ENCODE measurements at regions of chr6 and their contacts with region 1.

Region 1: DNA sequence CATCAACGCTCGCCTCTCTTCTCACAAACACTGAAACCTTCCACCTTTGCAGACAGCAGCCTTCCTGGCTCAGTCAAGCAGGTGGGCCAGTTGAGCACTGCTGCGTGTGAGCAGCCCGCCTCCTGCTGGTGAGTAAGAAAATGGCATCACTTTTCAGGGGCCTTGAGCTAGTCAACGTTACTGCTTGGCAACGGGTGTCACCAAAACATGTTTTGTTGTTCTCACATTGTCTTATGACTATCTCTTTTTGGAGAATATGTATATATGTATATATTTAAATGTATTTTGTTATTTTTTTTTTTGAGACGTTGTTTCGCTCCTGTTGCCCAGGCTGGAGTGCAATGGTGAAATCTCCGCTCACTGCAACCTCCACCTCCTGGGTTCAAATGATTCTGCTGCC is 97.0 kb upstream of the AGPAT4 start:
- H3K4me3 ChIP-seq: no peak overlapping the region
- H3K27ac ChIP-seq: no peak overlapping the region
- H3K4me1 ChIP-seq: no peaks in the 10 kb centered on the region
- CTCF ChIP-seq: peak; percentile 78

Region 2: DNA sequence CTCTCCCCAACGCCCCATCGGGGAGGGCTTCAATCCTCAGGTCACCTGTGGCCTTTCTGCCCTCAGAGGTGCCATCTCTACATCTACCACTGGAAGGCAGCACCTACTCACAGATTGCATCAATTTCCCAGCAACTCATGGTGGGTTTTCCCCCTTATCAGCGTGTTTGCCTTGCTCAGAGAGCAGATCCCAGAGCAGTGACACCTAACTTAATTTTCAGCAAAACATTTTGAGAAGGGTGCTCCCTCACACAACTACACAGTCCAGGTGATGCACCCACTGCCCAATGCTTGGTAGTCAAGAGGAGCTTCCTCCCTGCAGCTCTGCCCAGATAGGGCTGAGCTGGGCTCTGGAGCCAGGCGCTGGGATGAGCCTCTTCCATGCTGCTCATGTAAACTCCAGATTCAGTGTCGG is 620.6 kb before region 1 on chr6:
- CTCF ChIA-PET with region 1: interaction called, 59 read pairs
- POLR2A ChIA-PET with region 1: interaction called, 4 read pairs
- H3K4me3 ChIP-seq: no peak overlapping the region
- H3K27ac ChIP-seq: no peak overlapping the region
- H3K4me1 ChIP-seq: no peaks in the 10 kb centered on the region
- CTCF ChIP-seq: peak; percentile 69

Region 3: DNA sequence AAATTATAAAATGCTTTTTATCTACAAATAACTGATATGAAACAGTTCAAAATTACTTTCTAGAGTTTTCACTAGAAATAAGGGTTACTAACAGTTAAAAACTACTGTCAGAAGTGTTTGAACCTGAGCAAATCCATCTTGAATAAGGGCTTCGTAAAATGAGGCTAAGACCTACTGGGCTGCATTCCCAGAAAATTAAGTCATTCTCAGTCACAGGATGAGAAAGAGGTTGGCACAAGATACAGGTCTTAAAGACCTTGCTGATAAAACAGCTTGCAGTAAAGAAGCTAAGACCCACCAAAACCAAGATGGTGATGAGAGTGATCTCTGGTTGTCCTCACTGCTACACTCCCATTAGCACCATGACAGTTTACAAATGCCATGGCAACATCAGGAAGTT is 575.2 kb before region 1 on chr6:
- CTCF ChIA-PET with region 1: interaction called, 11 read pairs
- POLR2A ChIA-PET with region 1: no interaction called
- H3K4me3 ChIP-seq: no peak overlapping the region
- H3K27ac ChIP-seq: no peak overlapping the region
- H3K4me1 ChIP-seq: no peaks in the 10 kb centered on the region
- CTCF ChIP-seq: no peak

Region 4: DNA sequence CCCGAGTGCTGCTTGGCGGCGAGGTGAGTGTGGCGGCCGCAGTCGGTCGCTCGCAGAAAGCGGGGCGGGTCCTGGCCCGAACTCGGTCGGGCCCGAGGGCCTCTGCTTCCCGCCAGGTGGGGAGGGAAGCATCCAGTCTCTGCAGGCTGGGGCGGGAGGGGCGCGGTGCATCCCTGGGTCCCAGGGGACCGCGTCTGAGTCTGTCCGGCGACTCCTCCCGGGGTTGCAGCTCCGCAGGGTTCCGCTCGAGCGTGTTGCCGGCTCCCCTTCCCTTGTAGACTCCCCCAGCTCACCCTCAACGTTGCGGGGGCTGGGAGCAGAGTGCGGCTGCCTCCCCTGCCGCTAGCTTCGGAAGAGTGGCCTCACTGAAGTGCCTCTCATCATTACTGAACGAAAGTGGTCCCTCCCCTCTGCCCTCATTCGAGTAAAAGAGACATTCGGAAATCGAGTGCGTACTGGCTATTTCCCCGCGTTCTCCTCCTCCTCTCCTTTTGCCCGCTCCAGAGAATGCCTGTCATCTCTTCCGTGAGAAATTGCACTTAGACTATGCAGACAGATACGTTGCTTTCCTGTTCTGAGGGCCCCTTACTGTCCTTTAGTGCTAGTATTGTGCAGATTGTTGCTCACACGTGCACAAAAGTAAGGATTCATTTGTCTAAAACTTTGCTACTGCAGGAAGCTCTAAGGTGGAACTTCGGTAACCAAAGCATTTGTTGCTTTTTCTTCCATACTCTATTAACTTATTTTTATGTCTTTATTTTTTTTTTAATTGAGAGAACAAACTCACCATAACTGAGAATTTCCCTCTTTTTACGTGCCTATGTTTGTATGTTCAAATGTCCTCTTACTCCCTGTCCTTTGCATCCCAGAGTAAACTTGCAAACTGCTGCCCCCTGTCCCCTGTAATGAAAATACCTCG is 378.6 kb before region 1 on chr6:
- CTCF ChIA-PET with region 1: interaction called, 11 read pairs
- POLR2A ChIA-PET with region 1: no interaction called
- H3K4me3 ChIP-seq: peak overlapping the region; percentile 99
- H3K27ac ChIP-seq: peak overlapping the region; percentile 93
- H3K4me1 ChIP-seq: peaks cover 5% of the 10 kb centered on the region
- CTCF ChIP-seq: peak; percentile 60

Region 5: GRCh38 chr6:161273752-161274487 is 97.0 kb before region 1 on chr6 and contains the start of gene AGPAT4:
- CTCF ChIA-PET with region 1: interaction called, 11 read pairs
- POLR2A ChIA-PET with region 1: no interaction called
- H3K4me3 ChIP-seq: peak within 1 kb of the TSS; percentile 50
- H3K27ac ChIP-seq: peak within 1 kb of the TSS; percentile 37
- H3K4me1 ChIP-seq: peaks cover 9% of the 10 kb centered on the region; the same call in 1 of the 2 replicates
- CTCF ChIP-seq: no peak

Region 6: GRCh38 chr6:161359618-161359945 is 11.3 kb before region 1 on chr6:
- CTCF ChIA-PET with region 1: interaction called, 64 read pairs
- POLR2A ChIA-PET with region 1: no interaction called
- H3K4me3 ChIP-seq: no peak overlapping the region
- H3K27ac ChIP-seq: no peak overlapping the region
- H3K4me1 ChIP-seq: no peaks in the 10 kb centered on the region
- CTCF ChIP-seq: no peak